Common myeloid progenitor, CD34-positive (primary cell): ENCODE measurements at regions of chr1 and their contacts with region 1.

Region 1: GRCh38 chr1:89762779-89763648 is 57.8 kb upstream of the LRRC8D start:
- DNase-seq: peak; percentile 83 to 89 (median 89)
- H3K4me3 ChIP-seq: peak overlapping the region; percentile 47 to 82 (median 65)
- H3K27ac ChIP-seq: no peak overlapping the region
- H3K4me1 ChIP-seq: peaks cover 11 to 49% (median 24%) of the 10 kb centered on the region in 4 experiments
- H3K27me3 ChIP-seq: no peaks in the 10 kb centered on the region

Region 2: GRCh38 chr1:89483010-89483756 is 279.8 kb before region 1 on chr1:
- CTCF ChIA-PET with region 1: interaction called, 10 read pairs
- POLR2A ChIA-PET with region 1: no interaction called
- DNase-seq: peak; percentile 78 to 91 (median 88)
- H3K4me3 ChIP-seq: no peak overlapping the region
- H3K27ac ChIP-seq: no peak overlapping the region
- H3K4me1 ChIP-seq: peaks cover 0 to 17% (median 7%) of the 10 kb centered on the region in 4 experiments
- H3K27me3 ChIP-seq: peaks cover 0 to 1% (median 0%) of the 10 kb centered on the region in 5 experiments

Region 3: GRCh38 chr1:89598450-89599331 is 164.3 kb before region 1 on chr1:
- CTCF ChIA-PET with region 1: interaction called, 17 read pairs
- POLR2A ChIA-PET with region 1: interaction called, 4 read pairs
- DNase-seq: peak; percentile 42 to 73 (median 61)
- H3K4me3 ChIP-seq: no peak overlapping the region
- H3K27ac ChIP-seq: no peak overlapping the region
- H3K4me1 ChIP-seq: peaks cover 0 to 2% (median under 1%) of the 10 kb centered on the region in 4 experiments
- H3K27me3 ChIP-seq: no peaks in the 10 kb centered on the region

Region 4: DNA sequence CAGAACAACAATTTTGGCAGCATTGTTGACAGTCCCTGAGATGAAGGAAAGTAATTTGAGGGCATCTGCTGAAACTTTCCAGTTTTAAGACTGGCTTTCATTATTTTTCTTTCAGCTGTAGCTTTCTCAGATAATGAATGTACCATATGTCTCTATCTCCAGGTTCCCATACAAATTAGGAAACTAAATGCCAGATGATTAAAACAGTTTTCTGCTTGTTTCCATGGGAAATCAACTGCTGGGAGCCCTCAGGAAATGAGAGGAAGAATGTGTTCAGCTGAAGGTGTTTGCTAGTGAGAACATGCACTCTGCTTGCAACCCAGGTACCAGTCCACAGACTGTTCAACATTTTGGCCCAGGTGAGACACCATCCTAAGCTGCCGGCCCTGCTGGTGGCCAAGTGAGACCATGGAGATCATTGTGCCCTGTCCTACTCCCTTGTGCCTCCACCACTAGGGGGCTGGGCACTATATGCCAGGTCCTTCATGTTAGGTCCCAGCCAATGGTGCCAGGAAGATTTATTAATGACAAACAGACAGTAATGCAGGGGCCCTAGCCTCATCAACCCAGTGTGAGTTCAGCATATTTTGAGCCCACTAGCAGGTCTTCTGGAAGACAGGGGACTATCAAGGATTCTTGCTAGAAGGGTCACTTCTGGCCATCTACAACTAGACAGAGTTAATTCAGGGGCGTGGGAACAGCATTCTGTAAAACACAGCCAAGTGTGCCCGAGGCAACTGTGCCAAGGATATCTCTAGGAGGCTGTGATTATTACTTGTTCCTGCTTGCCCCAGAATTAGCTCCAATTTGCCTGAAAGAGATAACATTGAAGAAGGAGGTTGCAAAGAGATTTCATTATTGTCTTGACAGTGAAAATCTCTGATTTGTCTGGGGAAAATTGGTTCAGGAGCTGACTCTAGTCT is 147.1 kb before region 1 on chr1:
- CTCF ChIA-PET with region 1: interaction called, 46 read pairs
- POLR2A ChIA-PET with region 1: no interaction called
- DNase-seq: peak; percentile 50 to 65 (median 61)
- H3K4me3 ChIP-seq: no peak overlapping the region
- H3K27ac ChIP-seq: no peak overlapping the region
- H3K4me1 ChIP-seq: no peaks in the 10 kb centered on the region
- H3K27me3 ChIP-seq: no peaks in the 10 kb centered on the region

Region 5: DNA sequence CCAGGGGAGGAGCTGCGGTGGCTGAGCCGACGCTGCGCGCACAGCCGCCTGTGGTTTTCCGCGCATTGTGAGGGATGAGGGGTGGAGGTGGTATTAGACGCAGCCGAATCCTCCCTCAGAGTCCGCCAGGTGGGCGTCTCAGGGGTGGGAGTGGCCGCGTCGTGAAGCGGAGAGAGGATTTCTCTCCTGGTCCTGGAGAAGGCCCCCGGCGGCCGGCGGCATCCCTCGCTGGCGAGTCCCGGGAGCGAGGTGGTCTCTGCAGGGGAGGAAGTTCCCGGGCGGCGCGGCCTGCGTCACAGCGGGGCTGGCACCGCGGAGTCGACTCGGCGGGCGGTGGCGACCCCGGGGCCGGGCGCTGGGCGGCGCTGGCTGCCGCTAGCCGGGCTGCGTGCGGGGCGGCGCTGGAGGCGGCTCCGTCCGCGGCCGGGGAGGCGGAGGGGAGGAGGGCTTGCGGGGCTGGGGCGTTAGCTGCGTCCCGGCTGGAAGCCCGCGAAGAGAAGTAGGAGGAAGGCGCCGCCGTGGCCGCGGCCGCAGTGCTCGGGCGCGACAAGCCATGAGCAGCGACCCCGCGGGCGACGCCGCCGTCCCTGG is 130.3 kb before region 1 on chr1 and contains the start of gene LRRC8C:
- CTCF ChIA-PET with region 1: interaction called, 135 read pairs
- POLR2A ChIA-PET with region 1: interaction called, 13 read pairs
- DNase-seq: peak; percentile 87 to 93 (median 91)
- H3K4me3 ChIP-seq: peak within 1 kb of the TSS; percentile 67 to 97 (median 87)
- H3K27ac ChIP-seq: peak within 1 kb of the TSS; percentile 56 to 80
- H3K4me1 ChIP-seq: peaks cover 0 to 42% (median 21%) of the 10 kb centered on the region in 4 experiments
- H3K27me3 ChIP-seq: no peaks in the 10 kb centered on the region

Region 6: GRCh38 chr1:89719502-89720306 is 43.3 kb before region 1 on chr1:
- CTCF ChIA-PET with region 1: interaction called, 20 read pairs
- POLR2A ChIA-PET with region 1: no interaction called
- DNase-seq: peak; percentile 66 to 88 (median 85)
- H3K4me3 ChIP-seq: peak overlapping the region in 5 of 7 experiments; percentile 5 to 69 (median 22)
- H3K27ac ChIP-seq: peak overlapping the region in 1 of 2 experiments; percentile 70
- H3K4me1 ChIP-seq: peaks cover 20 to 56% (median 29%) of the 10 kb centered on the region in 4 experiments
- H3K27me3 ChIP-seq: no peaks in the 10 kb centered on the region

Region 7: GRCh38 chr1:89815611-89816010 is 52.6 kb after region 1 on chr1:
- CTCF ChIA-PET with region 1: no interaction called
- POLR2A ChIA-PET with region 1: no interaction called
- DNase-seq: peak; percentile 51 to 83 (median 82)
- H3K4me3 ChIP-seq: peak overlapping the region in 2 of 7 experiments; percentile 56 to 66
- H3K27ac ChIP-seq: no peak overlapping the region
- H3K4me1 ChIP-seq: peaks cover 10 to 39% (median 18%) of the 10 kb centered on the region in 4 experiments
- H3K27me3 ChIP-seq: no peaks in the 10 kb centered on the region